ENCODE measurements at regions of chr14 and their contacts with region 1.

Region 1: DNA sequence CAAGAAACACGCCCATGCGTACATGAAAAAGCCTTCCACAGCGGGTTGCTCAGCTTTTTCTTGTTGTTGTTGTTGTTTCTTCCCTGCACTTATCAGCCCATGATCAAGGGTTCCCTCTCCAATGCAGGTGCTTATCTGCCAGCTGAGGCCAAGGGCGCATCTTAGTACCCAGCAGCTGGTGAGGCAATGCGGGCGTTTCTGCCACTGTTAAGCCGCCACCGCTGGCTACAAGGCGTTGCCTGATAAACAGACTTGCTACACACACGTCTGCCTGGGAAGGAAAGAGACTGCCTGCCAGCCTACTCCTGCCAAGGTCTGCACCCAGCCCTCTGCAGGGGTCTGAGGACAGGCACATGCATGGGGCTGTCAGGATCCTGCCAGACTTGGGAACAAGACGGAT is 345.9 kb downstream of the BCL11B start:
- DNase-seq: peak in 8 of 9 donors; percentile 21 to 72 (median 63)
- ATAC-seq: peak; percentile 83
- H3K4me3 ChIP-seq: peak overlapping the region; percentile 9
- H3K4me3 Mint-ChIP-seq: peak overlapping the region; percentile 12 to 88 (median 84)
- H3K27ac ChIP-seq: peak overlapping the region; percentile 56
- H3K27ac Mint-ChIP-seq: peak overlapping the region in 8 of 9 donors; percentile 92 to 98 (median 95)
- H3K4me1 ChIP-seq: peaks cover 7 to 46% of the 10 kb centered on the region in 2 donors
- H3K4me1 Mint-ChIP-seq: peaks cover 31 to 76% (median 60%) of the 10 kb centered on the region in 7 donors
- H3K27me3 ChIP-seq: no peaks in the 10 kb centered on the region
- H3K27me3 Mint-ChIP-seq: peaks cover 0 to 12% (median 0%) of the 10 kb centered on the region in 5 donors

Region 2: GRCh38 chr14:98580131-98580678 is 345.9 kb before region 1 on chr14:
- CTCF ChIA-PET with region 1: no interaction called
- POLR2A ChIA-PET with region 1: no interaction called
- intact Hi-C with region 1: no loop called
- DNase-seq: peak in 5 of 9 donors; percentile 7 to 34 (median 29)
- ATAC-seq: no peak
- H3K4me3 ChIP-seq: no peak overlapping the region
- H3K4me3 Mint-ChIP-seq: no peak overlapping the region
- H3K27ac ChIP-seq: no peak overlapping the region
- H3K27ac Mint-ChIP-seq: peak overlapping the region in 1 of 9 donors; percentile 34
- H3K4me1 ChIP-seq: no peaks in the 10 kb centered on the region
- H3K4me1 Mint-ChIP-seq: peaks cover 0 to 5% (median 0%) of the 10 kb centered on the region in 7 donors
- H3K27me3 ChIP-seq: no peaks in the 10 kb centered on the region
- H3K27me3 Mint-ChIP-seq: peaks cover 0 to 10% (median 0%) of the 10 kb centered on the region in 5 donors

Region 3: DNA sequence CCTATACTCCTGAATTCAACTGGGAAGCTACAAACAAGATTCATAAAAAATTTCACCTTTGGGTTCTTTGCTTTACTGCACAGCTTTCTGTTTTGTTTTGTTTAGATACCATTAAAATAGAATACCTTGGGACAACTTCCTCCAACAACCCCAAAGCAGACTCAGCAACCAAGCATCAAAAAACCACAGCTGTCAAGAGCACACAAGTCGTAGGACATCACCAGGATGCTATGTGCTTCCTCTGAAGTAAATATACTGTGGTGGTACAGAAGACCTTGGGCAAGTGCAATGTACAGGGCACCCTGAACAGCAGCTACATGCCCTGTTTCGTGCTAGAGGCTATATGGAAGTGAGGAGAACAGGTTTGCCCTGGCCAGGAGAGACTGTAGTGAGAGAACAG is 13.5 kb before region 1 on chr14:
- CTCF ChIA-PET with region 1: interaction called, 4 read pairs
- POLR2A ChIA-PET with region 1: interaction called, 7 read pairs
- intact Hi-C with region 1: loop called in 1 of 2 experiments (anchors 1 kb)
- DNase-seq: peak in 6 of 9 donors; percentile 18 to 66 (median 51)
- ATAC-seq: peak; percentile 54
- H3K4me3 ChIP-seq: no peak overlapping the region
- H3K4me3 Mint-ChIP-seq: peak overlapping the region in 6 of 10 donors; percentile 20 to 69 (median 42)
- H3K27ac ChIP-seq: no peak overlapping the region
- H3K27ac Mint-ChIP-seq: peak overlapping the region; percentile 9 to 91 (median 50)
- H3K4me1 ChIP-seq: peaks cover 11% of the 10 kb centered on the region in 2 donors
- H3K4me1 Mint-ChIP-seq: peaks cover 23 to 60% (median 46%) of the 10 kb centered on the region in 7 donors
- H3K27me3 ChIP-seq: no peaks in the 10 kb centered on the region
- H3K27me3 Mint-ChIP-seq: peaks cover 0 to 7% (median 0%) of the 10 kb centered on the region in 5 donors